Activated CD4-positive, alpha-beta T cell treated with anti-CD3 and anti-CD28 coated beads for 36 hours (primary cell): ENCODE measurements at regions of chr2 and their contacts with region 1.

Region 1: DNA sequence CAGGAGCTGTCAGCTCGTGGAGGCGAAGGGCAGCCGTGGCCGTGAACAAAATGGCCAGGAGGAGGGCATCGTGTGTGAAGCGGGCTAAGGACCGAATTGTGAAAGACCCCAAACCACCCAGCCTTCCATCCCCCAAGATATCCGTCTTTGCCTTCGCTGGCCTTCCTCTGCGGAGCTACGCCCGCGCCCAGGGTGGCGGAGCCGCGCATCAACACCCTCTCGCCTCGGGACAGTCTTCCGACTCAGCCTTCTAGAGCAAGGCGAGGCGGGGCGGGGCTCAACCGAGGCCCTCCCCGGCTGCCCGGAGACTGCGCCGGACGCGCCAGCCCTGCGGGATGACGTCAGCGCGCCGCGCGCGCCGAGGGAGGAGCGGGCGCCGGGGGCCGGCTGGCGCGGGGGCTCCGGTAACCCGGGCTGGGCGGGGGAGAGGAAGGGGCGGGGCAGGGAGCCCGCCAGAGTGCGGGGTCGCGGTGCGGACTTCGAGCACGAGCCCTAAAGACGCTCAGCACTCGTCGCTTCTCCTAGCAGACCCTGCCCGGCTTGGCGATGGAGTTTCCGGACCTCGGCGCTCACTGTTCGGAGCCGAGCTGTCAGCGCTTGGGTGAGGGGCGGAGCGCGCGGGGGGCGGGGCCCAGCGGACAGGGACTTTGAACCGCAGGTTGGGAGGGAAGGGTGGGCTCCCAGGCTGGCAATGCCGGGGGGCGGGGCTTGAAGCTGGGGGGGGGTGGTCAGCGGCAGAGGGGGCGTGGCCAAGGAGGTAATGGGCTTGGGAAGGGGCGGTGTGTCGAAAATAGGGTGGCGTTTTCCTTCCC is at the start of gene ZFAND2B:
- DNase-seq: peak; percentile 98
- ATAC-seq: peak; percentile 96
- H3K4me3 Mint-ChIP-seq: peak within 1 kb of the TSS; percentile 86
- H3K27ac Mint-ChIP-seq: peak within 1 kb of the TSS; percentile 94
- H3K4me1 Mint-ChIP-seq: peaks cover 34% of the 10 kb centered on the region
- H3K27me3 Mint-ChIP-seq: no peaks in the 10 kb centered on the region
- total RNA-seq, gene ZFAND2B: 21.5 to 27.6 TPM

Region 2: DNA sequence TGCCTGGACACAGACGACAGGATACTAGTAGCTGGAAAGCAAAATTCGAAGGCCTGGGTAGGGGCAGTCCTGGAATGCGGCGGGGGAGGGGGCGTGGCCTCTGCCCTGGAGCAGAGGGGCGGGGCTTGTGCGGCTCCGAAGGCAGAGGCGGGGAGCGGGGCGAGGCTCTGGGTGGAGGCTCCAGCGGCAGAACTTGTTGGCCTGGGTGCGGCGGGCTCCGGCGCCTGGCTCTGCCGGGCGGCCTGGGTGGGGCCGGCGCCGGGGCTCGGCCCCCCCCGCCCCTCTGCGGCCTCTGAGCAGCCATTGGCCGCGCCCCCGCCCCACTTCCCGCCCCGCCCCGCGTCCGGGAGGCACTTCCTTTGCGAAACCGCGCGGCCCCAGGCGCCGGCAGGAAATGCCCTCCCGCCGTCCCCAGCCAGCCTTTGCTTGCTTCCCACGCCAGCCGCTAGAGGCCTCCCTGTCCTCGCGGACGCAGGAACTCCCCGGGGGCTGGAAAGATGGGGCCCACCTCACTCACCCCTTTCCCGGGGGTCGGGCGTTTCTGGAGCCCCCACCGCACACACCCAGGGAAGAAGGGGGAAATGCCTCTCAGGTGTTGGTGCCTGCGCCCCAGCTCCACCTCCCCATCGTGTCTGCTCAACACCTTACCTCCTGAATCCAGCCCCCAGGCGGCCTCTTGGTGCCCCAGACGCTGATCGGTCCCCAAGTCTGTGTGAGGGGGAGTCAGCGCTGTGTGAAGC is 800.3 kb before region 1 on chr2:
- CTCF ChIA-PET with region 1: no interaction called
- POLR2A ChIA-PET with region 1: no interaction called
- intact Hi-C with region 1: loop called in 1 of 2 experiments (anchors 2 kb)
- DNase-seq: peak; percentile 97
- ATAC-seq: peak; percentile 88
- H3K4me3 Mint-ChIP-seq: peak overlapping the region; percentile 75
- H3K27ac Mint-ChIP-seq: peak overlapping the region; percentile 90
- H3K4me1 Mint-ChIP-seq: peaks cover 38% of the 10 kb centered on the region
- H3K27me3 Mint-ChIP-seq: peaks cover 5% of the 10 kb centered on the region

Region 3: GRCh38 chr2:219171231-219171651 is 35.4 kb before region 1 on chr2:
- CTCF ChIA-PET with region 1: interaction called, 13 read pairs
- POLR2A ChIA-PET with region 1: interaction called, 3 read pairs
- intact Hi-C with region 1: loop called in 1 of 2 experiments (anchors 1 kb)
- DNase-seq: peak; percentile 39
- ATAC-seq: peak; percentile 64
- H3K4me3 Mint-ChIP-seq: no peak overlapping the region
- H3K27ac Mint-ChIP-seq: peak overlapping the region; percentile 2
- H3K4me1 Mint-ChIP-seq: peaks cover 31% of the 10 kb centered on the region
- H3K27me3 Mint-ChIP-seq: no peaks in the 10 kb centered on the region

Region 4: DNA sequence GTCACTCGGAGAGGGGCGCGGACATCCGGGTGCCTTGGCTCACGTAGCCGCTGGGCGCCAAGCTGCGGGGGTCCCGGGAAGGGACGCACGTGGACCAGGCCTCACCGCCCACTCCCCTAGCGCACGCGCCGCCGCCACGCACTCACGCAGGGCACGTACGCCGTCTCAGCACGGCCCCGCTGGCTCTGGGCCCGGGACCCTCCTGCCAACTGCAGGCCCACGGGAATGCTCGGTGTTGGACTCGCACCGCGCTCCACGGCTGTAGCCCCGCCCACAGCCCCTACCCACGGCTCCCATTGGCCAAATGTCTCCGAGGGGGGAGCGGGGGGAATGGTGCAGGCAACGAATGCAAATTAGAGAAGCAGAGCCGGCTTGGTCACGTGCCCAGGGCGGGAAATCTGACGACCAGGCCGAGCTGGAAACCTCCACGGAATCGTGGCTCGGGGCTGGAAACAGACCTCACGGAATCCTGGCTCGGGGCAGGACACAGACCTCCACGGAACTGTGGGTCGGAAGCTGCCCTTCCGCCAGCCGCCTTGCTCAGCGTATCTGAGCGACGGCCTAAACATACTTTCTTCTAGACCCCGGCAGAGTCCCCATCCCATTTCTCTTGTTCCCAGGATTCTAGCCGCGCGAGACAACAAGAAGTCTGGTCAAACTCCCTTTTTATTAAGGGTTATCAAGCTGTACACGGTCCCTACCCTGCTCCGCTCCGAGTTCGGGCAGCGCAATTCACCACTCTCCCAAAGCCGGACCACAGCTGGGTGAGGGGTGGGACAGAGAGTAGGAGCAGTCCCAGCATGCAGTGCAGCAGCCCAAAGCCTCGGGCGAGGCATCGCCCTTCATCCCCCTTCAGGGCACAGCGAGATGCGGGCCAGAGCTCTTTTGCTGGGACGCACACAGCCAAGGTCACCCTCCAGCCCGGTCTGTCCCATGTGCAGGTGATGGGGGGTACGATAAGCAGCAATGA is 12.4 kb after region 1 on chr2 and contains the start of gene ABCB6:
- CTCF ChIA-PET with region 1: interaction called, 3 read pairs
- POLR2A ChIA-PET with region 1: interaction called, 8 read pairs
- intact Hi-C with region 1: loop called (anchors 1 kb)
- DNase-seq: peak; percentile 94
- ATAC-seq: peak; percentile 89
- H3K4me3 Mint-ChIP-seq: peak within 1 kb of the TSS; percentile 83
- H3K27ac Mint-ChIP-seq: peak within 1 kb of the TSS; percentile 74
- H3K4me1 Mint-ChIP-seq: peaks cover 24% of the 10 kb centered on the region
- H3K27me3 Mint-ChIP-seq: no peaks in the 10 kb centered on the region
- total RNA-seq, gene ABCB6: 18.2 to 21.9 TPM

Region 5: GRCh38 chr2:219229305-219230058 is 22.8 kb after region 1 on chr2 and contains the starts of genes ANKZF1 and ATG9A:
- CTCF ChIA-PET with region 1: interaction called, 5 read pairs
- POLR2A ChIA-PET with region 1: interaction called, 5 read pairs
- intact Hi-C with region 1: loop called (anchors 1 kb)
- DNase-seq: peak; percentile 99
- ATAC-seq: peak; percentile 98
- H3K4me3 Mint-ChIP-seq: peak within 1 kb of the TSS; percentile 98
- H3K27ac Mint-ChIP-seq: peak within 1 kb of the TSS; percentile 98
- H3K4me1 Mint-ChIP-seq: peaks cover 34% of the 10 kb centered on the region
- H3K27me3 Mint-ChIP-seq: no peaks in the 10 kb centered on the region
- total RNA-seq, gene ANKZF1: 140 to 166 TPM
- total RNA-seq, gene ATG9A: 43.5 to 45.6 TPM

Region 6: DNA sequence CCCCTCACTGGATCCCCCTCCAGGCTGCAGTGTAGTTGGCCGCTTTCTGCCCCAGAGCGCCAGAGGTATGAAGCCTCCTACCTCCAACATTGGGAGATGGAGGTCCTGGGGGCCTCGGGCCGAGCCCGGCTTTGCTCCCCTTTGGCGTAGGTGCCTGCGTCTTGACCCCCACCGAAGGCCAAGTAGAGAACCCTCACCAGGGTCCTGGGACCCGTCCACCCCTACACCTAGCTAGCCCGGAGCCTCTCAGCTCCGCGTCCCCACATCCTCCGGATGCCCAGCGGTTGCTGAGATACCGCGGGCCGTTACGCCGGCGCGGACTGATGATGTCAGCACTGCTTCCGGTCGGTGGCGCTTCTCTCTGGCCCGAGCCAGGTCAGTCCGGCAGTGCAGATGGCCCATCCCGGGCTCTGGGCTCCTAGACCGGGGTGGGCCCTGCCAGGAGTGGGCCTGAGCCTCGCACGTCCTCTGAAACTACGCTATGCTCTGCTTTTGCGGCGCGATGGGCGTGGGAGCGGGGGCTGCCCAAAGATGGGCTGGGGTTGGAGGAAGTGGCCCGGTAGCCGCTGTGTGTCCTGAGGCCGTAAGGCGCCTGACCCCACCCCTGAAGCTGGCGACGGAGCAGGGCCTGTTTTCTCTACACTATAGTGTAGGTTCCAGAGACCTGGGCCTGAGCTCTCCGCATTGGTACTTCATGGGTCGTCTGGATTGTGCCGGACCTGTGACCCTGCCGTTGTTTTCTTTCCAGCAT is 38.7 kb after region 1 on chr2 and contains the starts of genes GLB1L and STK16:
- CTCF ChIA-PET with region 1: interaction called, 5 read pairs
- POLR2A ChIA-PET with region 1: no interaction called
- intact Hi-C with region 1: loop called in 1 of 2 experiments (anchors 1 kb)
- DNase-seq: peak; percentile 93
- ATAC-seq: peak; percentile 62
- H3K4me3 Mint-ChIP-seq: peak within 1 kb of the TSS; percentile 89
- H3K27ac Mint-ChIP-seq: peak within 1 kb of the TSS; percentile 100
- H3K4me1 Mint-ChIP-seq: peaks cover 59% of the 10 kb centered on the region
- H3K27me3 Mint-ChIP-seq: no peaks in the 10 kb centered on the region
- total RNA-seq, gene GLB1L: 2.7 to 4.2 TPM
- total RNA-seq, gene STK16: 34.3 to 35.4 TPM

Region 7: GRCh38 chr2:219253753-219254590 is 47.3 kb after region 1 on chr2 and contains the start of gene TUBA4A:
- CTCF ChIA-PET with region 1: interaction called, 3 read pairs
- POLR2A ChIA-PET with region 1: interaction called, 14 read pairs
- intact Hi-C with region 1: loop called (anchors 1 to 2 kb)
- DNase-seq: peak; percentile 94
- ATAC-seq: peak; percentile 63
- H3K4me3 Mint-ChIP-seq: peak within 1 kb of the TSS; percentile 89
- H3K27ac Mint-ChIP-seq: peak within 1 kb of the TSS; percentile 93
- H3K4me1 Mint-ChIP-seq: peaks cover 54% of the 10 kb centered on the region
- H3K27me3 Mint-ChIP-seq: no peaks in the 10 kb centered on the region
- total RNA-seq, gene TUBA4A: 210 to 369 TPM